ENCODE measurements at regions of chr1 and their contacts with region 1.

Region 1: GRCh38 chr1:67749844-67750689 is 65.1 kb downstream of the GADD45A start:
- DNase-seq: no peak
- ATAC-seq: peak; percentile 9

Region 2: GRCh38 chr1:67561704-67562113 is 188.4 kb before region 1 on chr1:
- intact Hi-C with region 1: loop called (anchors 10 kb)
- DNase-seq: peak; percentile 95
- ATAC-seq: peak; percentile 93